ENCODE measurements at regions of chr6 and their contacts with region 1.

Region 1: GRCh38 chr6:117887361-117887760 is 19.7 kb upstream of the SLC35F1 start:
- DNase-seq: no peak
- ATAC-seq: no peak
- H3K4me3 ChIP-seq: no peak overlapping the region
- H3K27ac ChIP-seq: no peak overlapping the region
- H3K4me1 ChIP-seq: no peaks in the 10 kb centered on the region
- H3K27me3 ChIP-seq: no peaks in the 10 kb centered on the region
- CTCF ChIP-seq: no peak

Region 2: GRCh38 chr6:117861545-117861944 is 25.8 kb before region 1 on chr6:
- CTCF ChIA-PET with region 1: no interaction called
- POLR2A ChIA-PET with region 1: interaction called, 13 read pairs
- in situ Hi-C with region 1: no loop called
- intact Hi-C with region 1: no loop called
- DNase-seq: no peak
- ATAC-seq: no peak
- H3K4me3 ChIP-seq: no peak overlapping the region
- H3K27ac ChIP-seq: no peak overlapping the region
- H3K4me1 ChIP-seq: no peaks in the 10 kb centered on the region
- H3K27me3 ChIP-seq: no peaks in the 10 kb centered on the region
- CTCF ChIP-seq: no peak